Psoas muscle (tissue), 8 donors: ENCODE measurements at regions of chr20 and their contacts with region 1.

Region 1: DNA sequence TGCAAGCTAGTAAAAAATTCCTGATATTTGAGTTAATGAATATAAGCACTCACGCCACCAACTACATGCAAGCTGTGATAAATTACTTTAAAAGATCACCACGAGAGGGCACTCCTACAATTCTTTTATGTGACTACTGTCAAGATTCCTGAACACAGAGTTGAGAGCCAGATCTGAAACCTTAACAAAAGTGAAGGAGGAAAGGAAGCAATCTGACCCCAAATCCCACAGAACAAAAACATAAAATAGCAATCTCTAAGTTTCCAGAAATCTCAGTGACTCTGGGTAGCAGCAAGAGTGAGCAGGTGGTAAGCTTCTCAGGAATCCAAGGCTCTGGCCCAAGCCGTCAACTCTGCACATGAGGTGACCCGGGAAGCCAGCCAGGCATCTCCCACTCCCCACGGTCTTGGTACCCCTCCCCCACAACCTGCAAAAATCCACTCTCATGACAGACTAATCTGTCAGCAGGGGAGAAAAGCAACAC is 55.1 kb downstream of the STAU1 start:
- DNase-seq: no peak
- ATAC-seq: peak; percentile 59 to 87 (median 70)
- H3K4me3 ChIP-seq: no peak overlapping the region
- H3K27ac ChIP-seq: no peak overlapping the region
- H3K4me1 ChIP-seq: no peaks in the 10 kb centered on the region
- H3K27me3 ChIP-seq: no peaks in the 10 kb centered on the region
- CTCF ChIP-seq: peak; percentile 56

Region 2: GRCh38 chr20:49216991-49217578 is 84.0 kb after region 1 on chr20:
- intact Hi-C with region 1: loop called (anchors 1 to 2 kb)
- DNase-seq: peak; percentile 91 to 96
- ATAC-seq: peak; percentile 56 to 71 (median 66)
- H3K4me3 ChIP-seq: no peak overlapping the region
- H3K27ac ChIP-seq: no peak overlapping the region
- H3K4me1 ChIP-seq: peaks cover 3% of the 10 kb centered on the region
- H3K27me3 ChIP-seq: no peaks in the 10 kb centered on the region
- CTCF ChIP-seq: peak; percentile 91